Activated CD8-positive, alpha-beta T cell treated with anti-CD3 and anti-CD28 coated beads for 36 hours (primary cell): ENCODE measurements at regions of chr19 and their contacts with region 1.

Region 1: DNA sequence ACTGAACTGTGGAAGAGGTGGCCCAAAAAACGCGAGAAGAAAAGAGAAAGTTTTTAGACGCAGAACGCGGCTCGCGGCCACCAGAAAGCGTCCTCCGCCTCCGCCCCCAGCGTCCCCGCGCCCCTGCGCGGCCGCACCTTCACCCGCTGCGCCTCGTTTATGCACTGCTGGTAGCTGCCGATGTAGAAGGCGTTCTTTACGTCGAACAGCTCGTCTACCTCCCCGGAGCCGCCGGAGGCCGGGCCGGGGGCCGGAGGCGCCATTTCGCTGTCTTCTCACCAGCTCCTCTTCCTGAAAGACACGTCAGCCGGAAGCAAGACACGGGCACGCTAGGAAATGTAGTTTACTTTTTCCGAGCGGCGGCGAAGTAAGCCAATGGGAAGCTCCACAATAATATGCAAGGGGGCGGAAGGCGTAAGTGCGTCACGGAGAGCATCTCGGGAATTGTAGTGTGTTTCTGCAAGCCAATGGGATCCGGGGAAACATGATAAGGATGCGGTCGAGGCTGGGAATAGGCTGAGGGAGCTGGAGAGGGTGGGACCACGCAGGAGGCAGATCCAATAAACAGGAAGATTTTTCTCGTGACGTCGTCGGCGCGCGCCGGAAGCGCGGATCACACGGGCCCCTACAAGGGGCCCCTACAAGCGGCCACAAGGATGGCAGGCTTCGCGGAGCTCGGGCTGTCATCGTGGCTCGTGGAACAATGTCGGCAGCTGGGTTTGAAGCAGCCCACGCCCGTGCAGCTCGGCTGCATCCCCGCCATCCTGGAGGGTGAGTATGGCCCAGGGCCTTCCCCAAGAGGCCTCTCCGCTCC is at the starts of genes COPE and DDX49:
- DNase-seq: peak; percentile 99
- ATAC-seq: peak; percentile 97
- H3K4me3 Mint-ChIP-seq: peak within 1 kb of the TSS; percentile 99
- H3K27ac Mint-ChIP-seq: peak within 1 kb of the TSS; percentile 96
- H3K4me1 Mint-ChIP-seq: peaks cover 30% of the 10 kb centered on the region
- H3K27me3 Mint-ChIP-seq: no peaks in the 10 kb centered on the region
- CTCF ChIP-seq: no peak
- total RNA-seq, gene COPE: 179 to 183 TPM
- total RNA-seq, gene DDX49: 61.0 to 61.6 TPM

Region 2: DNA sequence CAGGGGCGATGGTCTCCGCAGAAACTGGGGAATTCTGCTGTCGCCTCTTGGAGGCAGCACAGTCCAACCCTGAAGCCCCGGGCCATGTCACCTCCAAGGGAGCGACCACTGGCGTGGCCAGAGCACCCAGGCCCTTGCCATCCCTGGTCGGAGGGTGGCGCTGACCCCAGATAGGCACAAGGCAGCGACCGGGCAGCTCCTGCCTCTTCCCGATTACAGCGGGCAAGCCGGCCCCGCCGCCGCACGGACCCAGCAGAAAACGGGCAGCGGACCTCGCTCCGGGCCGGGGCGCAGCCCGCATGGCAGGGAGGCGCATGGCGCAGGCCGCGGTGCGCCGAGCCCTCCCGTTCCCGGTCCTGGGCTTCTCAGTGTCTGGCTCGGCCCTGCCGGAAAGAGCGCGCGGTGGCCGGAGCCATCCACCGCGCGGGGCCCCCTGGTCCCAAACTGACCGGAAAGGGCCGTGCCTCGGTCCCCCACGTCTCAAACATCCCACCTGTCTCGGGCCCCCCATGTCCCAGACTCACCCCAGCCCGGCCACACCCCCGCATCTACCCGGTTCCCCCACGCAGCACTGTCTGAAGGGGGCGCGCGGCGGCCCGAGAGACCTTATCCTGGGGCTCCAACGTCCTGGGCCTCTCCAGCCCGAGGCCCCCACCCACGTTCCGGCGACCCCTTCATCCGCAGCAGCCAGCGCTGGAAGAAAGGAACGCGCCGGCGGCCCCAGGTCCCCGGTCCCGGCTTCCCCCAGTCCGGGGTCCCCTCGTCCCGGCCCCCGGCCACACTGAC is 24.1 kb before region 1 on chr19:
- CTCF ChIA-PET with region 1: no interaction called
- POLR2A ChIA-PET with region 1: interaction called, 11 read pairs
- intact Hi-C with region 1: no loop called
- DNase-seq: peak; percentile 14
- ATAC-seq: no peak
- H3K4me3 Mint-ChIP-seq: peak overlapping the region; percentile 45
- H3K27ac Mint-ChIP-seq: no peak overlapping the region
- H3K4me1 Mint-ChIP-seq: peaks cover 2% of the 10 kb centered on the region
- H3K27me3 Mint-ChIP-seq: peaks cover 28% of the 10 kb centered on the region
- CTCF ChIP-seq: no peak

Region 3: DNA sequence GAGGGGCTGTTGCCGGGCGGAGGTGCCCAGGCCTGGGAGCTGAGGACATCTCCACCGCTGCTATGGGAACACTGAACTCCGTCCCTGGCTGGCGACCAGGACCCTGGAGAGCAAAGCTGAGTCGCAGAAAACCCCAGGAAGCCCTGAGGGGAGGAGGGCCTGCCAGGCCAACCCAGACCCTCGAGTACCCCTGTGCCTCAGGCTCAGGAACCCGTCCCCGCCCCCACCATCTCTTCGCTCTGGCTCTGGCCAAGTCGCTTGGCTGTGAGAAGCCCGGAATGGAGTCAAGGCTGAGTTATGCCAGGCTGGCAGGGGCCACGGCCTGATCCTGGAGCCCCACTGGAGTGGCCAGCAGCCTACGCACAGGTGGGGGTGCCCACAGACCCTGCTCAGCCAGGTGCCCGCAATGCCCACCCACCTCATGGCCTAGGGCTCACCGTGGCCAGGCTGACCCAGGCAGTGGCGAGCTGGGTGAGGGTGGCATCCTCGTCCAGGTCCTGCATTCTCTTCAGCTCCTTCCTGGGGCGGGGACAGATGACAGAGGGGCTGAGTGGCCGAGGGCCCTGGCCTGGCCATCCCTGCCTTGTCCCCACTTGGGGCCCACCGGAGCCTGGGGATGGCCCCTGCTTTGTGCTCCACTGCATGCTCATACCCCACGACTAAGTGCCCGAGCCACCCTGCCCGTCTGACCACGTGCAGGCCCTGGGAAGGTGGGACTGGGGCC is 14.8 kb before region 1 on chr19:
- CTCF ChIA-PET with region 1: no interaction called
- POLR2A ChIA-PET with region 1: interaction called, 10 read pairs
- intact Hi-C with region 1: no loop called
- DNase-seq: no peak
- ATAC-seq: no peak
- H3K4me3 Mint-ChIP-seq: no peak overlapping the region
- H3K27ac Mint-ChIP-seq: no peak overlapping the region
- H3K4me1 Mint-ChIP-seq: no peaks in the 10 kb centered on the region
- H3K27me3 Mint-ChIP-seq: no peaks in the 10 kb centered on the region
- CTCF ChIP-seq: no peak

Region 4: GRCh38 chr19:18932216-18932841 is 13.0 kb after region 1 on chr19:
- CTCF ChIA-PET with region 1: interaction called, 5 read pairs
- POLR2A ChIA-PET with region 1: interaction called, 33 read pairs
- intact Hi-C with region 1: no loop called
- DNase-seq: peak; percentile 90
- ATAC-seq: peak; percentile 98
- H3K4me3 Mint-ChIP-seq: peak overlapping the region; percentile 64
- H3K27ac Mint-ChIP-seq: no peak overlapping the region
- H3K4me1 Mint-ChIP-seq: peaks cover 3% of the 10 kb centered on the region
- H3K27me3 Mint-ChIP-seq: peaks cover 14% of the 10 kb centered on the region
- CTCF ChIP-seq: no peak

Region 5: DNA sequence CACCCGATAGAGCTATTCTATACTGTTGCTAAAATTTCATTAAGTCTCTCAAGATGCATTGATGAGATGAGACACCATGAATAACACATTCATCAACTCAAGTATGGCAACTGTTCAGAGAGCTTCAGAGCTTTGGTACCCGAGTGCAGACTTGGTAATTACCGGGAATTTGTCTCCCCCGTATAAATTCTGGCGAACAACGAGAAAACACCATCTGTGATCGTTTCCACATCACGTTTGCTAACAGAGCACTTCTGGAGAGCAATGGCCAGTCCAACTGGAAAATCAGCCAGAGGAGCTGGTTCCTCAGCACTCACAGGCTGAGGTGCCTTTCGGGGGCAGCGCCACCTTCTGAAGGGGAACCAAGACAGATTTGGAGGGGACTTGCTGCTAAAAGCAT is 73.8 kb after region 1 on chr19:
- CTCF ChIA-PET with region 1: no interaction called
- POLR2A ChIA-PET with region 1: no interaction called
- intact Hi-C with region 1: no loop called
- DNase-seq: no peak
- ATAC-seq: no peak
- H3K4me3 Mint-ChIP-seq: no peak overlapping the region
- H3K27ac Mint-ChIP-seq: no peak overlapping the region
- H3K4me1 Mint-ChIP-seq: no peaks in the 10 kb centered on the region
- H3K27me3 Mint-ChIP-seq: no peaks in the 10 kb centered on the region
- CTCF ChIP-seq: no peak